GM12878 (cell line): ENCODE measurements at regions of chr4 and their contacts with region 1.

Region 1: DNA sequence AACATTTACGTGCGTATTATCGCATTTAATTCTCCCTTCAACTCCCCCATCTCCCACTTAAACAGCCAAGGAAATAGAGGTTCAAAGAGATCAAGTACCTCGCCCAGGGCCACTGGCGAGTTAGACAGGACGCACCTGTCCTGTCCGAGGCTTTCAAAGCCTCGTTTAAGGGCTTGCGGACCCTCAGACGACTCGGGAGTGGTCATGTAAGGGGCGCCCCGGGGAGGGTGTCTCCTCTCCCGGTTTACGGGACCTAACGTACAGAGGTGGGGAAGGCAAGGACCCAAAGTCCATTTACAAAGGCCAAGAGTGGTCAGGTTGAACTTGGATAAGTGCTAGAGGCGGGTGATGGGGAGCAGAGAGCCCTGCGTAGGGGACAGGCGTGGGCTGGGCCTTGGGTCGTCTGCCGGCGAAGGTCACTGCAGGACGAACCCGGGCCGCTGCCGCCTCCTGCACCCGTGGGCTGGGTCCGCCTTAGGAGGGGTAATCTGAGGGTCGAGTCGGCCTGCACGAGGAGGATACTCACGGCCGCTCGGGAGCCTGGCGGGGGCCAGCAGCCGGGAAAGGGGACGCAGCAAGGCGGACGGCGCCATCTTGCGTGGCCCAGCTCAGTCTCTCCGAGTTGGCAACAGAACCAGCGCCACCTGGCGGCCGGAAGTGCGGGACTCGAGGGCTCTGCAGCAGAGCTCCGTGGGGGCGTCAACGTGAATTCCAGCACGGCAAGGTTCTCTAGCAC is 5.9 kb upstream of the NAA15 start:
- DNase-seq: peak; percentile 56
- ATAC-seq: peak; percentile 97
- H3K4me3 ChIP-seq: peak overlapping the region; percentile 93
- H3K27ac ChIP-seq: peak overlapping the region; percentile 94
- H3K4me1 ChIP-seq: peaks cover 16% of the 10 kb centered on the region; the same call in 1 of the 2 replicates
- H3K27me3 ChIP-seq: no peaks in the 10 kb centered on the region
- CTCF ChIP-seq: peak; percentile 92 to 98 (median 98)
- EP300 ChIP-seq: 0 out of 4 replicates have a peak, but pooled peaks of 1 of the 2 experiments have one; percentile 10
- POLR2A ChIP-seq: peak; percentile 97
- RAD21 ChIP-seq: peak; percentile 79

Region 2: GRCh38 chr4:138616775-138617174 is 678.6 kb before region 1 on chr4:
- CTCF ChIA-PET with region 1: no interaction called
- POLR2A ChIA-PET with region 1: no interaction called
- RAD21 ChIA-PET with region 1: no interaction called
- SMC1A ChIA-PET with region 1: no interaction called
- in situ Hi-C with region 1: no loop called
- intact Hi-C with region 1: no loop called
- DNase-seq: no peak
- ATAC-seq: no peak
- H3K4me3 ChIP-seq: no peak overlapping the region
- H3K27ac ChIP-seq: no peak overlapping the region
- H3K4me1 ChIP-seq: no peaks in the 10 kb centered on the region
- H3K27me3 ChIP-seq: no peaks in the 10 kb centered on the region
- CTCF ChIP-seq: no peak
- EP300 ChIP-seq: no peak
- POLR2A ChIP-seq: no peak
- RAD21 ChIP-seq: no peak

Region 3: GRCh38 chr4:139099366-139099982 is 195.9 kb before region 1 on chr4:
- CTCF ChIA-PET with region 1: interaction called, 20 read pairs
- POLR2A ChIA-PET with region 1: no interaction called
- RAD21 ChIA-PET with region 1: interaction called, 27 read pairs
- SMC1A ChIA-PET with region 1: interaction called, 19 read pairs
- in situ Hi-C with region 1: no loop called
- intact Hi-C with region 1: loop called (anchors 1 kb)
- DNase-seq: peak; percentile 45
- ATAC-seq: peak; percentile 93
- H3K4me3 ChIP-seq: no peak overlapping the region
- H3K27ac ChIP-seq: no peak overlapping the region
- H3K4me1 ChIP-seq: no peaks in the 10 kb centered on the region
- H3K27me3 ChIP-seq: no peaks in the 10 kb centered on the region
- CTCF ChIP-seq: peak; percentile 81 to 88 (median 83)
- EP300 ChIP-seq: no peak
- POLR2A ChIP-seq: no peak
- RAD21 ChIP-seq: peak; percentile 92

Region 4: GRCh38 chr4:139184129-139184528 is 111.2 kb before region 1 on chr4:
- CTCF ChIA-PET with region 1: interaction called, 13 read pairs
- POLR2A ChIA-PET with region 1: no interaction called
- RAD21 ChIA-PET with region 1: interaction called, 8 read pairs
- SMC1A ChIA-PET with region 1: interaction called, 13 read pairs
- in situ Hi-C with region 1: loop called (anchors 5 kb)
- intact Hi-C with region 1: loop called (anchors 2 kb)
- DNase-seq: no peak
- ATAC-seq: peak; percentile 81
- H3K4me3 ChIP-seq: no peak overlapping the region
- H3K27ac ChIP-seq: no peak overlapping the region
- H3K4me1 ChIP-seq: no peaks in the 10 kb centered on the region
- H3K27me3 ChIP-seq: peaks cover 0 to 3% of the 10 kb centered on the region in 2 experiments; a peak in 2 of 4 replicates
- CTCF ChIP-seq: peak; percentile 19 to 52 (median 21); a peak in 4 of 6 replicates
- EP300 ChIP-seq: no peak
- POLR2A ChIP-seq: no peak
- RAD21 ChIP-seq: peak; percentile 69

Region 5: DNA sequence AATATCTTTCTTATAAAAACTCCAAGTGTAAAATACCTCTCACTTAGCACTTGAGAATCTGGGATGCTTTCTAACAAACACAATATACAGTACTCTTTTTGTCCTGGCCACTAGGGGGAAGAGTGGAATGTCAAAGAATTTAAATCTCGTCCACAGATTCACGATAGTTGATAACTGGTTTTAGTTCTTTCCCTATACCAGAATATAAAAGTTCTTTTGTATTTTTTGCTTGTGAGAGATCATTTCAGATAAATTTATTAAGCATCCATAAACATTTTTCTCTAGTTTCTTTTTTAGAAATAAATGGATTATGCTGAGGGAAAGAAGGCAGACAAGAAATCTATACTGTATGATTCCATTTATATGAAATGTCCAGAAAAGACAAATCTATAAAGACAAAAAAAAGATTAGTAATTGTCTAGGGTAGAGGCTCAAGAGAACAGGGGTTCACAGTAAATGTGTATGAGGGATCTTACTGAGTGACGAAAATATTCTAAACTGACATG is 65.8 kb before region 1 on chr4:
- CTCF ChIA-PET with region 1: interaction called, 53 read pairs
- POLR2A ChIA-PET with region 1: interaction called, 7 read pairs
- RAD21 ChIA-PET with region 1: interaction called, 32 read pairs
- SMC1A ChIA-PET with region 1: interaction called, 28 read pairs
- in situ Hi-C with region 1: no loop called
- intact Hi-C with region 1: loop called (anchors 1 kb)
- DNase-seq: no peak
- ATAC-seq: peak; percentile 86
- H3K4me3 ChIP-seq: no peak overlapping the region
- H3K27ac ChIP-seq: no peak overlapping the region
- H3K4me1 ChIP-seq: no peaks in the 10 kb centered on the region
- H3K27me3 ChIP-seq: no peaks in the 10 kb centered on the region
- CTCF ChIP-seq: peak; percentile 61 to 74 (median 64)
- EP300 ChIP-seq: no peak
- POLR2A ChIP-seq: no peak
- RAD21 ChIP-seq: peak; percentile 84

Region 6: GRCh38 chr4:139253713-139254112 is 41.7 kb before region 1 on chr4:
- CTCF ChIA-PET with region 1: interaction called, 11 read pairs
- POLR2A ChIA-PET with region 1: no interaction called
- RAD21 ChIA-PET with region 1: interaction called, 3 read pairs
- SMC1A ChIA-PET with region 1: interaction called, 3 read pairs
- in situ Hi-C with region 1: no loop called
- intact Hi-C with region 1: no loop called
- DNase-seq: no peak
- ATAC-seq: no peak
- H3K4me3 ChIP-seq: no peak overlapping the region
- H3K27ac ChIP-seq: no peak overlapping the region
- H3K4me1 ChIP-seq: no peaks in the 10 kb centered on the region
- H3K27me3 ChIP-seq: no peaks in the 10 kb centered on the region; a peak in 1 of 4 replicates
- CTCF ChIP-seq: no peak
- EP300 ChIP-seq: no peak
- POLR2A ChIP-seq: no peak
- RAD21 ChIP-seq: no peak

Region 7: DNA sequence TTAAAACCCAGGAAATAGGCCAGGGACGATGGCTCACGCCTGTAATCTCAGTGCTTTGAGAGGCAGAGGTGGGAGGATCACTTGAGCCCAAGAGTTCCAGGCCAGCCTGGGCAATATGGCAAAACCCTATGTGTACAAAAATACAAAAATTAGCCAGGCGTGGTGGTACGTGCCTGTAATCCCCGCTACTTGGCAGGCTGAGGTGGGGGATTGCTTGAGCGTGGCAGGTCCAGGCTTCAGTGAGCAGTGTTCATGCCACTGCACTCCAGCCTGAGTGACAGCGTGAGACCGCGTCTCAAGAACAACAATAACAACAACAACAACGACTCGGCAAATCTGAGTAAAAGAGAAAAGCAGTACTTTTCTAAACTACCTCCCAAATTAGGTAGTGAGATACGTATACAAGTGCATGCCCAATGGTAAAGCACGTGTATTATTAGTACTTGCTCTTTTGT is 19.9 kb after region 1 on chr4:
- CTCF ChIA-PET with region 1: interaction called, 20 read pairs
- POLR2A ChIA-PET with region 1: interaction called, 29 read pairs
- RAD21 ChIA-PET with region 1: interaction called, 13 read pairs
- SMC1A ChIA-PET with region 1: interaction called, 15 read pairs
- in situ Hi-C with region 1: no loop called
- intact Hi-C with region 1: no loop called
- DNase-seq: peak; percentile 45
- ATAC-seq: peak; percentile 82
- H3K4me3 ChIP-seq: peak overlapping the region; percentile 39; the same call in 1 of the 2 replicates
- H3K27ac ChIP-seq: peak overlapping the region; percentile 29
- H3K4me1 ChIP-seq: peaks cover 20% of the 10 kb centered on the region
- H3K27me3 ChIP-seq: no peaks in the 10 kb centered on the region
- CTCF ChIP-seq: no peak
- EP300 ChIP-seq: no peak
- POLR2A ChIP-seq: no peak
- RAD21 ChIP-seq: no peak